Adrenal gland (tissue), 19 donors: ENCODE measurements at regions of chr19 and their contacts with region 1.

Region 1: DNA sequence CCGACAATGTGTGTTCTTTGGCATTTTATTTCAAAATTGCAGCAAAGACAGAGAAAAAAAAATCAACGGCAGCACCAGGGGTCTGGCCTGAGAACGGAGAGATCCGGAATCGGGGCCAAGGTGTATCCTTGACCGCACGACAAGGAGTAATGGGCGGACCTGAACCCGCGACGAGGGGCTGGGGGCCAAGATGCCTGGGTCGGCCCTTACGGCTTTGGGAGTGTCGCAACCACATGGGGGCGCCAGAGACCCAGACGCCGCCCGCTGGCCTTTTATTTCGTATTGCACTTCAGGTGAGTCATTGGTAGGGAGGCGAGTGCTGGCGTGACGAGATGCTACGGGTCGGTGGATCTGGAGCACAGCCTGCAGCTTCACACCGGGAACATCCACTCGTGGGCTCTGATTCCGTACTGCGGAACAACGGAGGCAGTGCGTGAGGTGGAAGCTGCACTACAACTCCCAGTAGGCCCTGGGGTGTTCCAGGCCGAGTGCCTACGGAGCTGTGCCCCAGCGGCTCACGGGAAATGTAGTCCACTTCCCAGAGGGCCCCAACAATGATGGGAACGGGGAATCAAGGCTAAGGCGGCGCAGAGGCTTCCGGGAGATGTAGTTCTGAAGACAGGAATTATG is 15.7 kb downstream of the BCAT2 start:
- DNase-seq: peak; percentile 91 to 98 (median 95)
- H3K4me3 ChIP-seq: peak overlapping the region in 2 of 4 donors; percentile 7 to 28
- H3K27ac ChIP-seq: peak overlapping the region; percentile 26 to 93 (median 77)
- H3K4me1 ChIP-seq: peaks cover 0 to 11% of the 10 kb centered on the region in 2 donors
- H3K27me3 ChIP-seq: no peaks in the 10 kb centered on the region
- CTCF ChIP-seq: peak; percentile 85 to 99 (median 96)
- POLR2A ChIP-seq: peak in 1 of 2 donors; percentile 12

Region 2: GRCh38 chr19:48835734-48836088 is 40.5 kb after region 1 on chr19:
- intact Hi-C with region 1: loop called (anchors 2 kb)
- DNase-seq: peak; percentile 95 to 99 (median 97)
- H3K4me3 ChIP-seq: peak overlapping the region in 3 of 4 donors; percentile 62 to 67 (median 65)
- H3K27ac ChIP-seq: peak overlapping the region in 4 of 5 donors; percentile 39 to 91 (median 86)
- H3K4me1 ChIP-seq: peaks cover 4 to 7% of the 10 kb centered on the region in 2 donors
- H3K27me3 ChIP-seq: no peaks in the 10 kb centered on the region
- CTCF ChIP-seq: peak; percentile 76 to 97 (median 95)
- POLR2A ChIP-seq: peak in 1 of 2 donors; percentile 86

Region 3: GRCh38 chr19:48970923-48971395 is 175.8 kb after region 1 on chr19:
- intact Hi-C with region 1: loop called in 1 of 2 experiments (anchors 5 kb)
- DNase-seq: peak; percentile 69 to 89 (median 83)
- H3K4me3 ChIP-seq: no peak overlapping the region
- H3K27ac ChIP-seq: no peak overlapping the region
- H3K4me1 ChIP-seq: peaks cover 12 to 15% of the 10 kb centered on the region in 2 donors
- H3K27me3 ChIP-seq: no peaks in the 10 kb centered on the region
- CTCF ChIP-seq: peak; percentile 79 to 90 (median 87)
- POLR2A ChIP-seq: peak in 1 of 2 donors; percentile 13